ENCODE measurements at regions of chr10 and their contacts with region 1.

Region 1: GRCh38 chr10:93702211-93703001 is at the start of gene FRA10AC1:
- DNase-seq: peak; percentile 88 to 98 (median 92)

Region 2: DNA sequence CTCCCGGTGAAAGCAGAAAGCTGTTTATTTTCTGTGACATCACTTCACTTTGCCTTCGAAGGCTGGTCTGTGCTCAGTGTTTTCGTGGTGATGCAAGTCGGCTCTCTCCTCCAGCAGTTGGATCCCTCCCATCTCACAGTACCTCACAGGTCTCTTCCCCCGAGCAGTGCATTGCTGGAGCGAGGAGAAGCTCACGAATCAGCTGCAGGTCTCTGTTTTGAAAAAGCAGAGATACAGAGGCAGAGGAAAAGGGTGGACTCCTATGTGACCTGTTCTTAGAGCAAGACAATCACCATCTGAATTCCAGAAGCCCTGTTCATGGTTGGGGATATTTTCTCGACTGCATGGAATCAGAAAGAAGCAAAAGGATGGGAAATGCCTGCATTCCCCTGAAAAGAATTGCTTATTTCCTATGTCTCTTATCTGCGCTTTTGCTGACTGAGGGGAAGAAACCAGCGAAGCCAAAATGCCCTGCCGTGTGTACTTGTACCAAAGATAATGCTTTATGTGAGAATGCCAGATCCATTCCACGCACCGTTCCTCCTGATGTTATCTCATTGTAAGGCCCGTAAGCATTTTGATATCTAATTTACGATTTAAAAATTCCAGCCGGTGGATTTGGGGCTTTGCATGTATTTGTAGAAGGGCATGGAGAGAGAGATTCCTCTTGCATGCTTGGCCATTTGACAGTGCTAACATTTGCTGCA is 55.5 kb after region 1 on chr10 and contains the start of gene LGI1:
- intact Hi-C with region 1: loop called (anchors 2 kb)
- DNase-seq: peak in 8 of 10 donors; percentile 33 to 93 (median 64)

Region 3: DNA sequence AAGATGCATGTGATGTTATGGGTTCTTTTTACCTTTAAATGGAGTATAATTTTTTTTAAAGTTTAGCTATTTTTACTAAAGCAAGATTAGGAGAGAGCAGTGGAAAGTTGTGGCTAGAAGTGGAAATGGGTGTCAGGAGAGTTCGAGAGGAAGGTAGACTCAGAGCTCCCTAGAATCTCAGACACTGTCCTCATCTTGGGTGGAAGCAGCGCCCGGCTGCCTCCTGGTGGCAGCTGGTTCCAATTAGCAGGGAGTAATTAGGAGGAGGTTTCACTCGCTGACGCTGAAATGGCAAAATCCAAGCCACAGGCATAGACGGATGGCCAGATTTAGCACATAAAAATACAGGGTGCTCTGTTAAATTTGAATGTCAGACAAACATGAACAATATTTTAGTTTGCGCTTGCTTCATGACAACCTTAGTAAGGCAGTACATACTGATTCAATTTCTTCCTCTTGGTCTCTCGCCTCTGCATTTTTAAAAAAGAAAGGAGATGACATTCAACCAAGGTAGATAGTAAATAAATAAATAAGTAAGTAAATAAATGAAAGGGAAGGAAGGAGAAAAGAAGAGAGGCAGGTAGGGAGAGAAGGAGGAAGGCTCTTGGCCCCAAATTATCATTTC is 113.8 kb after region 1 on chr10:
- intact Hi-C with region 1: loop called (anchors 1 kb)
- DNase-seq: peak; percentile 44 to 94 (median 72)

Region 4: DNA sequence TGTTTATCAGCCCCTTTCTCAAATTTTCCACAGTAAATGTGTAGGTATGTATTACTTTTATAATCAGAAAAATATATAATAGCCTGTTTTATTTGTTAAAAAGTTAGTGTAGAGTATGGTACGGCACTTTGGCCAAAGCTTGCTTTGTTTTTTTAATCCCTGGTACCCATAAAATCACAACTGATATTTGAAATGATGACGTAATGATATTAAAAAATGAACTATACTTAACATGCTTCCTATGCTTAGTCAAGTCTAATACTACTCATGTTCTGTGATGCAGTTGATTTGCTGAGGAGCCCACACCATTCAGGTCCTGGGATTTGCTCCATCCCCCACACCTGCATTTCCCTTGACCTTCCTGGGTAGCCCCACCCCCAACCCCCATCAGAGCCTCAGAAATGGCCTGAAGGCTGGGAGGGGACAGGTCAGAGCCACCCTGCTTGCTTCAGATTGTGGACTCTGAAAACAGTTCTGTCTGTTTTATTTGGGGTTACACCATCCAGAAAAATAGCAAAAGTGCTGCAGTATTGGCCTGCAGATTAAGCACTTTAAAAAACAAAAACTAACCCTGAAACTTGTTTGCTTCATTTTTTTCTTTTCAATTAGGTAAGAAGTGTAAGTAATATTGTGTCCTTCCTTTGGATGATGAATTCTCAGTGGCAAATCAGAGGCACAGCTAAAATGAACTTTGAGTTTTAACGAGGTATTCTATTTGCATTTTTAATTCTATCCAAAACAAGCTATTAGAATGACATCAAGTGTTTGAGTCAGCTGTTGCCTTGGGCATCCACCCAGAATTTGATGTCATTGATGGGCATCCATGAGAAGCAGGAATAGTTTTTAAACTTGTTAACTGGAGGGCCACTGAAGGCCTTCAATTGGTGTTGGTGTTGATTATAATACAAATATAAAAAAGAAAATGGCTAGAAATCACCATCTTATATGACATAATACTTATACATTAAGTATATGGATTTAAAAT is 314.6 kb after region 1 on chr10:
- intact Hi-C with region 1: no loop called
- DNase-seq: no peak

Measured in posterior cingulate gyrus (tissue), 11 donors.